GM10248 (cell line): ENCODE measurements at regions of chr14 and their contacts with region 1.

Region 1: GRCh38 chr14:24093901-24094761 is at the start of gene PCK2:
- DNase-seq: peak; percentile 91
- CTCF ChIP-seq: no peak

Region 2: DNA sequence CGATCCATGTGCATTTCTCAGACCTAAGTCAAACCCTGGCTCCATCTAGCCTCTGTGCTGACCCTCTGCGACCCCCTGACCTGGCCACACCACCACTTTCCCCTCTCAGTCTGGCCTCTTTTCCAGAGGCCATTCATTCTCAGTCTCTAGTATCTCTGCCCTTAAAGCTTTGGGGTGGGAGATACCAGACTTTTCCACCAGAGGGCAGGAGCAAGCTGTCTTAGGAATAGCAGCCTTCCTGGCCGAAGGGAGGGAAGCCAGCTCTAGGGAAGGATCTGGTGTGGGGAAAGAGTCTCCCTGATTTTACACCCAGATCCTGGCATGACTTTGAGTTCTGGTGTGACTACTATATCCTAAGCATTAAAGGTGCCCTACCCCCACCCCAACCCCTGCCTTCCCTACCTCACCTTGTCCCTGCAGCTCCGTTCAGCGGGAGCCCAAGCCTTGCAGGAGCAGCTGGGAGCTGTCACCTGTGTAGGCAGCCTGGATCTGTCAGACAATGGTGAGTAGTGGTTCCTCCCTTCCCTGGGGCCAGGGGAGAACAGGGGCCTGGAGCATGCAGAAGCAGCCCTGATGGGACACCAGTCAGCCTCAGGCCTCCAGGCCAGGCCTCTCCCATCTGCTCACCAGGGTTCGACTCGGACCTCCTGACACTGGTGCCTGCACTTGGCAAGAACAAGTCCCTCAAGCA is 35.7 kb before region 1 on chr14:
- CTCF ChIA-PET with region 1: interaction called, 118 read pairs
- POLR2A ChIA-PET with region 1: no interaction called
- DNase-seq: peak; percentile 70
- CTCF ChIP-seq: peak; percentile 73

Region 3: DNA sequence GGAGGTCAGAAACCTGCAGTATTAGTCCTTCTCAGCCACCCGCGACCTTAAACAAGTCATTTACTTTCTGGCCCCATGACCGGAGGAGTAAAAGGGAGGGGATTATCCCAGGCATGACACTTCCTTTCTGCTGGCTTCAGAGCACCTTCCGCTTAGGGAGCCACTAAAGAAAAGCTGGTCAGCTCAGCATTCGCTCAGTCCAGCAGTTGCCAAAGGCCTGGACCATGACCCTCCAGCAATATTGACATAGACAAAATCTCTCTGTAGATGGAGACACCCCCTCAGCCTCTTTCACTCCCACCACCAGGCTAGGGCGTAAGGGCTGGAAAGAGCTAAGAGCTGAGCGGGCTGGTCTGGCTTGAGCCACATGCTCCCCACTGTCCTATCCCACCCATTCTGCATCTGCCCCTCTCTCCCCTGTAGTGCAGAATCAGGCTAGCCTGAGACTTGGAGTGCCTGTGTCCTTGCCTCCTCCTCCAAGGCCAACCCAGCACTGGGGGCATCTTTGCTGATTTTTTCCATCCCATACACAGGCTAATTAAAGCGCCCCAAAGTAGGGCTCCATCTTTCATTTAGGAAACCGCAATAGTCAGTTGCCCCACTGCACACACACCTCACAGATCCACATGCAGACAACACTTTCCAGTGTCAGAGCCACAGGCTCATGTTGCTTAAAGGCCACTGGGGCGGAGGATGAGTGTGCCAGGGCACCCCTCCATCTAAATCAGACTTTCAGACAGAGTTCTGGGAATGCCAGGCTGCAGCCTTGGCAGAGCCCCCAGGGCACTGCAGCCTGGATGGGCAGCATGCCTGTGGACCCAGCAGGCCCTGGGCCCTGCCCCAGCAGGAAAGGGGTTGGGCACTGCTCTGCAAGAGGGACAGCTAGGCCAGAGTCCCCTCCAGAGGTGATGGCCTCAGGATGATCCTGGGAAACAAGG is 26.7 kb before region 1 on chr14:
- CTCF ChIA-PET with region 1: interaction called, 118 read pairs
- POLR2A ChIA-PET with region 1: no interaction called
- DNase-seq: no peak
- CTCF ChIP-seq: no peak

Region 4: GRCh38 chr14:24075485-24076301 is 18.4 kb before region 1 on chr14:
- CTCF ChIA-PET with region 1: interaction called, 90 read pairs
- POLR2A ChIA-PET with region 1: no interaction called
- DNase-seq: peak; percentile 61
- CTCF ChIP-seq: no peak

Region 5: DNA sequence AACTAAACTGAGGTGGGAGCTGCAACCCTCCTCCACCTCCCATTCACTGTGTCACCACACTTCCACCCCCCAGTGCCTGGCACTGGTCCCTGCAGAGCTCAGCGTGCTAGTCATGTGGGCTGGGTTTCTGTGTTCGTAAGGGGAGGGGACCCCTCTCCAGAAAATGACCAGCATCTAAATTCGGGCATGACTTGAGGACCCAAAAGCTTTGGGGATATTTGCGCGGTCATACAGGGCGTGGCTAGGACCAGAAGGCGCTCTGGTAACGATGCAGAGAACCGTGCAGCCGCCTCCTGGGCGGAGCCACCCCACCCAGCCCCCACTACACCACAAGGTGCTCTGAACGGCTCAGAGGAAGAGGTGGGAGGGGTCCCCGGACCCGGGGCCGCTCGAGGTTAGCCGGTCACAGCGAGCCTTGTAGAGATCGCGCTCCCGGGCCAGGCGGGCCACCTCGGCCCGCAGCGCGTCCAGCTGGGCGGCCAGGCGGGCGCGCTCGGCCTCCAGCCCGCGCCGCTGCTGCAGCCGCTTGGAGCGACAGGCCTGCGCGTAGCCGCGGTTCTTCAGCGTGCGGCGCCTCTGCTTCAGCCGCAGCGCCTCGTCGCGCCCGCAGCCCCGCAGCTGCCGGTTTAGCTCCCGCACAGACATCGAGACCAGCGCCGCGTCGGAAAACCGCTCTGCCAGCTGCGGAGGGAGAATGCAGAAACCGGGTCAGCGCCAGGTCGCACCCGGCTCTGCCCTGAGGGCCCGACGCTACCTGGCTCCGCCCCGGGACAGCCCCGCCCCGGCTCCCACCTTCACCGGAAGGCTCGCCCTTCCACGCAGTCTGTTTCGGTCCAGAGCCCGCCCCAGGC is 13.0 kb before region 1 on chr14:
- CTCF ChIA-PET with region 1: interaction called, 90 read pairs
- POLR2A ChIA-PET with region 1: no interaction called
- DNase-seq: peak; percentile 86
- CTCF ChIP-seq: no peak